ENCODE measurements at regions of chr21 and their contacts with region 1.

Region 1: GRCh38 chr21:15729674-15730483 is at the start of gene USP25:
- DNase-seq: peak; percentile 76 to 85 (median 82)
- ATAC-seq: peak; percentile 93
- H3K4me3 ChIP-seq: peak within 1 kb of the TSS; percentile 58
- H3K4me3 Mint-ChIP-seq: peak within 1 kb of the TSS; percentile 92 to 98 (median 97)
- H3K27ac ChIP-seq: peak within 1 kb of the TSS; percentile 83
- H3K27ac Mint-ChIP-seq: peak within 1 kb of the TSS; percentile 85 to 97 (median 94)
- H3K4me1 ChIP-seq: peaks cover 19 to 27% of the 10 kb centered on the region in 2 donors
- H3K4me1 Mint-ChIP-seq: peaks cover 9 to 45% (median 33%) of the 10 kb centered on the region in 7 donors
- H3K27me3 ChIP-seq: no peaks in the 10 kb centered on the region
- H3K27me3 Mint-ChIP-seq: peaks cover 0 to 33% (median 0%) of the 10 kb centered on the region in 5 donors
- total RNA-seq, gene USP25: 51.0 to 67.4 (median 56.5) TPM

Region 2: DNA sequence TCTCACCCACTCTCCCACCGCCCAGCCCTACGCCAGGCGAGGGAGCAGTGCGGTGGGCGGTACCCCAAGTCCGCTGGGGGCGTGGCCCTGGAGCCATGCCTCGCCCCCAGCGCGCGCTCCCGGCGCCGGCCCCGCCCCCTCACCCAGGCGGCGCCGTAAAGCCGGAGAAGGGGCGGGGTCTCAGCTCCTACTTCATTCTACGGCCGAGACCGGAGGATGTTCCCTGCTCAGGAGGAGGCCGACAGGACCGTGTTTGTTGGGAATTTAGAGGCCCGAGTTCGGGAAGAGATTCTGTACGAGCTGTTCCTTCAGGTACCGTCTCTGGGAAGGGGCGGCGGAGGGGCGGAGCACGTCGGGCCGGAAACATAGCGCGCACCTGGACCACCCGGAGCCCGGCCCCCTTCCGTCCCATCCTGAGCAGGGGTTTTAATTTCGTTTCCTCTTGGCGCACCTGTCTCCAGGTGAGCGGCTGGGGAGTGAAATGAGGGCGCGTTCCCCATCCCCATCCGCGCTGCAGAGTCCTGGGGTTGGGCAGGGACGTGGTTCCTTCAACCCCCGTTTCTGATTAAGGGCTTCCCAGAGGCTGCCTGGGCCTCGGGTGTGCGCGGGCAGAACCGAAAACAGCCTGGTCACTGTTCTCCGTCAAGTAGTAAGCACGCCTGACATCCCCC is 1513.8 kb before region 1 on chr21 and contains the start of gene RBM11:
- CTCF ChIA-PET with region 1: no interaction called
- POLR2A ChIA-PET with region 1: no interaction called
- intact Hi-C with region 1: loop called (anchors 1 to 2 kb)
- DNase-seq: peak; percentile 69 to 88 (median 82)
- ATAC-seq: peak; percentile 99
- H3K4me3 ChIP-seq: peak within 1 kb of the TSS; percentile 80
- H3K4me3 Mint-ChIP-seq: peak within 1 kb of the TSS; percentile 86 to 93 (median 90)
- H3K27ac ChIP-seq: peak within 1 kb of the TSS; percentile 77
- H3K27ac Mint-ChIP-seq: peak within 1 kb of the TSS in 8 of 9 donors; percentile 61 to 88 (median 82)
- H3K4me1 ChIP-seq: peaks cover 0 to 8% of the 10 kb centered on the region in 2 donors
- H3K4me1 Mint-ChIP-seq: peaks cover 0 to 10% (median 8%) of the 10 kb centered on the region in 7 donors
- H3K27me3 ChIP-seq: no peaks in the 10 kb centered on the region
- H3K27me3 Mint-ChIP-seq: peaks cover 4 to 26% (median 8%) of the 10 kb centered on the region in 5 donors
- total RNA-seq, gene RBM11: 0.46 to 19.3 (median 4.9) TPM

Region 3: GRCh38 chr21:15051644-15052458 is 678.0 kb before region 1 on chr21:
- CTCF ChIA-PET with region 1: no interaction called
- POLR2A ChIA-PET with region 1: no interaction called
- intact Hi-C with region 1: no loop called
- DNase-seq: no peak
- ATAC-seq: peak; percentile 54
- H3K4me3 ChIP-seq: no peak overlapping the region
- H3K4me3 Mint-ChIP-seq: peak overlapping the region; percentile 54 to 89 (median 75)
- H3K27ac ChIP-seq: no peak overlapping the region
- H3K27ac Mint-ChIP-seq: peak overlapping the region in 8 of 9 donors; percentile 12 to 78 (median 38)
- H3K4me1 ChIP-seq: peaks cover 0 to 57% of the 10 kb centered on the region in 2 donors
- H3K4me1 Mint-ChIP-seq: peaks cover 59 to 93% (median 82%) of the 10 kb centered on the region in 7 donors
- H3K27me3 ChIP-seq: no peaks in the 10 kb centered on the region
- H3K27me3 Mint-ChIP-seq: no peaks in the 10 kb centered on the region

Region 4: DNA sequence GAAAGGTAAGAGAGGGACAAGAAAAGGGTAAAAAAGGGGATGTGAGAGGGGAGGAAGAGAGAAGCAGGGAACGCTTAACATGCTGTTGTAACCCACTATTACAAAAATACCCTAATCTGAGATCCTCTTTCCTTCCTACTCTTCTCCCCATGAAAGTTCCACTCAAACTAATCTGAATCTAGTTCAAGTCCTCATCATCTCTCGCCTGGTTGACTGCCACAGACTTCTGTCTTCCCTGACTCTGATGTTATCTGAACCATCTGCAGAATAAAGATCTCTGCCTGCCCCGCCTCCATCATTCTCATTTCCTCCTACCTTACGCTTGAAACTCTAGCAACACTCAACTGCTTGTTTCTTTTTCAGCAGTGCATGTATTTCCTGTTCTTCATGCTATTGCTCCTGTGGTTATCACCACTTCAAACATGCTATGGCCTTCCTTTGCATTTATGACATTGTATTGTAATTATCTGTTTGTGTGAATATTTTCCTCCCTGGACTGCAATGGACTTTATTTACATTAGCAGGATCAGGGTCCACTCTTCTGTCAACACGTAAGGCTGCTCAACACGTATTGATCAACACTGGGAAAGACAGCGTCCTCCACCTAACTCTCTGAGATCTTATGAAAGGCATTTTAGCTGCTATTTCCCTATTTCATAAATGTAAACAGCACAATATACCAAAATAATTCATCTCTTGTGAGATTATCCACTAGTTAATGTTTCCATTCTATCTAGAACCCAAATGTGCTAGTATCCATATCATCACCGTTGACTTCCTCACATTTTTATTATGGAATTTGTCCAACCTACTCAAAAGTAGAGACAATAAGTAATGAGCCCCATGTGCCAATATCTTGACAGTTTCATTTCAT is 215.6 kb before region 1 on chr21:
- CTCF ChIA-PET with region 1: interaction called, 3 read pairs
- POLR2A ChIA-PET with region 1: no interaction called
- intact Hi-C with region 1: loop called (anchors 1 to 2 kb)
- DNase-seq: peak in 8 of 9 donors; percentile 34 to 87 (median 82)
- ATAC-seq: peak; percentile 99
- H3K4me3 ChIP-seq: peak overlapping the region; percentile 23
- H3K4me3 Mint-ChIP-seq: peak overlapping the region; percentile 59 to 76 (median 69)
- H3K27ac ChIP-seq: peak overlapping the region; percentile 46
- H3K27ac Mint-ChIP-seq: peak overlapping the region; percentile 75 to 94 (median 87)
- H3K4me1 ChIP-seq: peaks cover 12 to 32% of the 10 kb centered on the region in 2 donors
- H3K4me1 Mint-ChIP-seq: peaks cover 16 to 54% (median 31%) of the 10 kb centered on the region in 7 donors
- H3K27me3 ChIP-seq: no peaks in the 10 kb centered on the region
- H3K27me3 Mint-ChIP-seq: no peaks in the 10 kb centered on the region

Region 5: DNA sequence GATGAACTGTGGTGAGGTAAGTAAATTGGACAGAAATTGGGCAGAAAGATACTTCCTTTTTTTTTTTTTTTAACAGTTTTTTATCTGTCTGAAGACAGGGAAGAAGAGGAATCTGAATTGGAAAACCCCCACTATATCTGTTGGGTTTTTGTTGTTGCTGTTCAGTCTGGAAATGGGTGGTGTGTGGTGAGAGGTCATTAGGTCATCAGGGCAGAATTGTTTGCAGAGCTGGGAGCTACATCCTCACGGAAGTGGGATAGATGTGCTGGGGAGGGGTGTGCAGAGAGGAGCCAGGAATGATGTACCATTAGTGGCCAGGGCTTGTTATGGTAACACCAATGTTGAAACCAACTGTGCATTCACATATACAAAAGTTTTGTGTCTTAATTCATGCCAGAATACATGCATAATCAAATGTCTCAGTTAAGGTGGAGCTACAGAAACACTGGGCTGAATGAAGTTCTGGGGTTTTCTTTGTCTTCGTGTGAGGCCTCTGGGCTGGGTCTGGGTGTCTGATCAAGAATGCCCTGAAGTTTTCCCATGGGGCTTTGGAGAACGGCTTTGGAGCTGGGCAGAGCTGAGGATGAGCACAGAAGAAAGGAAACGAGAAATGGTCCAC is 12.3 kb after region 1 on chr21:
- CTCF ChIA-PET with region 1: no interaction called
- POLR2A ChIA-PET with region 1: interaction called, 4 read pairs
- intact Hi-C with region 1: loop called (anchors 1 to 2 kb)
- DNase-seq: no peak
- ATAC-seq: no peak
- H3K4me3 ChIP-seq: no peak overlapping the region
- H3K4me3 Mint-ChIP-seq: peak overlapping the region in 5 of 10 donors; percentile 5 to 98 (median 41)
- H3K27ac ChIP-seq: no peak overlapping the region
- H3K27ac Mint-ChIP-seq: peak overlapping the region in 2 of 9 donors; percentile 5 to 28
- H3K4me1 ChIP-seq: peaks cover 21 to 28% of the 10 kb centered on the region in 2 donors
- H3K4me1 Mint-ChIP-seq: peaks cover 53 to 100% (median 93%) of the 10 kb centered on the region in 7 donors
- H3K27me3 ChIP-seq: no peaks in the 10 kb centered on the region
- H3K27me3 Mint-ChIP-seq: no peaks in the 10 kb centered on the region

Region 6: GRCh38 chr21:15775981-15776380 is 46.1 kb after region 1 on chr21:
- CTCF ChIA-PET with region 1: no interaction called
- POLR2A ChIA-PET with region 1: no interaction called
- intact Hi-C with region 1: loop called in 1 of 2 experiments (anchors 2 kb)
- DNase-seq: no peak
- ATAC-seq: no peak
- H3K4me3 ChIP-seq: no peak overlapping the region
- H3K4me3 Mint-ChIP-seq: no peak overlapping the region
- H3K27ac ChIP-seq: no peak overlapping the region
- H3K27ac Mint-ChIP-seq: peak overlapping the region in 1 of 9 donors; percentile 51
- H3K4me1 ChIP-seq: peaks cover 0 to 4% of the 10 kb centered on the region in 2 donors
- H3K4me1 Mint-ChIP-seq: peaks cover 20 to 60% (median 40%) of the 10 kb centered on the region in 7 donors
- H3K27me3 ChIP-seq: no peaks in the 10 kb centered on the region
- H3K27me3 Mint-ChIP-seq: no peaks in the 10 kb centered on the region

Region 7: DNA sequence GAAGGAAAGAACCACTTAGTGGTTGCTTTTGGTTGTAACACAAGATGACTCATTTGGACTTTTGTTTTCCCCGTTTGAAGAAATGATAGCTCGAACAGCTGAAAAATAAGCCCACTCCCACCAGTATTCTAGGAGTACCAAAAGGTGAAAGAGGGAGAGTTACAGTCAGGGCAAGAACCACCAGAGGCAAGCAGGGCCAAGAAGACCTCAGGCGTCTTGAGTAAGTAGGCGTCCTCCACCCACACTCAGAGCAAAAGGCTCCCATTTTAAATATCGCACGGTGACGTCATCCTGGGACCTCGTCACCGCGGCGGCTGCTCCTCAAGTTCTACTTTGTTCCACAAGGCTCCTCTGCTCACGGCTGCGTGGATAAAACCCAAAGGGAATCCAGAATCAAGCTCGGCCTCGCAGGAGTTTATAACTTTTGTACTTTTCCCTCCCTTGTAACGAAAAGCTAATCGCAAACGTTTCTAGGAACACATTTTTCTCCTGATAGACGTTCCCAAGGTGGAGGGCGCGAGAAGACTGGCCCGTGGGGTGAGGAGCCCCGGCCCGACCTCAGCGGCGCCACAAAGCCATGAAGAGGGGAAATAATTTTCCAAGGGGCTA is 1881.6 kb after region 1 on chr21:
- CTCF ChIA-PET with region 1: no interaction called
- POLR2A ChIA-PET with region 1: no interaction called
- intact Hi-C with region 1: loop called (anchors 5 kb)
- DNase-seq: peak; percentile 57 to 84 (median 73)
- ATAC-seq: peak; percentile 72
- H3K4me3 ChIP-seq: peak overlapping the region; percentile 83
- H3K4me3 Mint-ChIP-seq: peak overlapping the region; percentile 85 to 98 (median 90)
- H3K27ac ChIP-seq: peak overlapping the region; percentile 72
- H3K27ac Mint-ChIP-seq: peak overlapping the region; percentile 77 to 100 (median 93)
- H3K4me1 ChIP-seq: peaks cover 0 to 7% of the 10 kb centered on the region in 2 donors
- H3K4me1 Mint-ChIP-seq: peaks cover 7 to 65% (median 19%) of the 10 kb centered on the region in 7 donors
- H3K27me3 ChIP-seq: no peaks in the 10 kb centered on the region
- H3K27me3 Mint-ChIP-seq: no peaks in the 10 kb centered on the region

Measured in naive thymus-derived CD4-positive, alpha-beta T cell (primary cell).